ENCODE measurements at regions of chr4 and their contacts with region 1.

Region 1: GRCh38 chr4:39977489-39978377 is at the start of gene PDS5A:
- DNase-seq: peak; percentile 90
- ATAC-seq: peak; percentile 91 to 92
- total RNA-seq, gene PDS5A: 35.3 to 40.3 TPM

Region 2: DNA sequence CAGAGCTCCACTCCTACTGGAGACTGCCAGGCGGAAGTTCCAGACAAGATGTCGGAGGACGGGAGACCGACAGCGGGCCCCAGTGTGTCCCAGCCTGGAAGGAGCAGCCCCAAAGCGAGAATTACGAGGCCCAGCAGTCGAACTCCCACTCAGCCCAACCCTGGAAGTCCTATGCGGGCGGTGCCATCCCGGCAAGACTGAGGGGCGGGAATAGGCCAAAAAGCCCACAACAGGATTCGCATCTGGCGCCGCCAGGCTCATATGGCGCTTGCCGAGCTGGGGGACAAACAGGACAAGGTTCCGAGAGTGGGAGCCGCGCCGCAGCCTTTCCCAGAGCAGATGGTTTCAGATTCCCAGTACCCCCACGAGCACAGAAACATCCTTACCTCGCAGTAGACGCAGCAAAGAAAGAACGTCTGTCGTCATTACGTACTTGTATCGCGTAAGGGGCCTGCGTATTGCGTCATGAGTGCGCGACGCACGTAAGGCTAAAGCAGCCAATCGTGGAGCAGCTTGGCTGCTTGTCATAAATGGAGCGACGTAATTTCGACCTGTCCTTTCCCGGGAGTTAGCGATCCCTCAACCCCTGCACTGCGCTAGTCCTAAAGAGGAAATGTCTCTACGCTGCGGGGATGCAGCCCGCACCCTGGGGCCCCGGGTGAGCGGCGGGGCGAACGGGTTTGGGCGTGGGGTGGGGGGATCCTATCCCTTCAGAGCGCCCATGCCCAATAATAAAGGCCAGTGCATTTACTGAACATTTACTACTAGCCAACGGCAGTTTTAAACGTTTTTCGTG is 519.0 kb before region 1 on chr4 and contains the starts of genes LIAS and RPL9:
- intact Hi-C with region 1: loop called in 1 of 2 experiments (anchors 10 kb)
- DNase-seq: peak; percentile 97
- ATAC-seq: peak; percentile 97
- total RNA-seq, gene LIAS: 16.7 to 24.1 TPM
- total RNA-seq, gene RPL9: 1,080 to 1,082 TPM

Region 3: GRCh38 chr4:39527273-39528060 is 450.3 kb before region 1 on chr4 and contains the start of gene UGDH:
- intact Hi-C with region 1: loop called in 1 of 2 experiments (anchors 5 kb)
- DNase-seq: peak; percentile 98
- ATAC-seq: peak; percentile 98
- total RNA-seq, gene UGDH: 28.7 to 40.6 TPM

Region 4: DNA sequence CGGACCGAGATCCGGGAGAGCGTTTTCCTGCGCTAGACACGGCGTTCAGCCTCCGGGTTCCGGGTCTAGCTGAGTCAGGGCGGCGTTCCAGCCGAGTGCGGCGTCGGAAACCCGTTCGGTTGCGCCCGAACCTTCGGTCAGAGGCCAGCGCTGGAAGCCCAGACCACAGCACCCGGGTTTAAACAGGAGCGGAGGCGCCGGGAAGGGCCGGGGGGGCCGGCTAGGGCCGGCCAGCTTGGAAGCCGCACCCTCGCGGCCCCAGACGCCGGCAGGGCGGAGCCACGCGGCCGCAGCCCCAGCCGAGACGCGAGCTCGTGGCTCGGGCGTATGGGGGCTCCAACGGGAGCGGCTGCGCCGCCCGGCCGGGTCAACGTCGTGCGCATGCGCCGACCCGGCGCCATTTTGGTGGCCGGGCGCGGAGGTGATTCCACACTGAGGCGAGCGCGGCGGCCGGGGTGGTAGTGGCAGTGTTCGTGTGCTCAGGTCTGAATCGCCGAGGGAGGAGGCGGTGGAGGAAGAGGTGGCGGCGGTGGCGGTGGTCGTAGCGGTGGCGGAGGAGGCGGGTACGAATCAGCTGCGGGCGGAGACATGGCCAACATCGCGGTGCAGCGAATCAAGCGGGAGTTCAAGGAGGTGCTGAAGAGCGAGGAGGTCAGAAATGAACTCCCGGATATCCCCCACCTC is 279.9 kb before region 1 on chr4 and contains the start of gene UBE2K:
- intact Hi-C with region 1: loop called (anchors 2 kb)
- DNase-seq: peak; percentile 92
- ATAC-seq: peak; percentile 98 to 99
- total RNA-seq, gene UBE2K: 52.2 to 60.9 TPM

Region 5: GRCh38 chr4:39922389-39922788 is 55.3 kb before region 1 on chr4:
- intact Hi-C with region 1: no loop called
- DNase-seq: no peak
- ATAC-seq: no peak

Region 6: GRCh38 chr4:40056716-40057585 is 79.2 kb after region 1 on chr4 and contains the start of gene N4BP2:
- intact Hi-C with region 1: loop called in 1 of 2 experiments (anchors 5 kb)
- DNase-seq: peak; percentile 87
- ATAC-seq: peak; percentile 87 to 88
- total RNA-seq, gene N4BP2: 4.3 to 4.7 TPM

Measured in left cardiac atrium (tissue), 4 donors.